Activated CD8-positive, alpha-beta T cell treated with anti-CD3 and anti-CD28 coated beads for 36 hours (primary cell): ENCODE measurements at regions of chr17 and their contacts with region 1.

Region 1: GRCh38 chr17:28661635-28662537 is at the starts of genes SDF2 and SUPT6H:
- DNase-seq: peak; percentile 98
- ATAC-seq: peak; percentile 87
- H3K4me3 Mint-ChIP-seq: peak within 1 kb of the TSS; percentile 97
- H3K27ac Mint-ChIP-seq: peak within 1 kb of the TSS; percentile 100
- H3K4me1 Mint-ChIP-seq: peaks cover 45% of the 10 kb centered on the region
- H3K27me3 Mint-ChIP-seq: no peaks in the 10 kb centered on the region
- CTCF ChIP-seq: no peak
- total RNA-seq, gene SDF2: 37.4 to 39.0 TPM
- total RNA-seq, gene SUPT6H: 60.3 to 63.3 TPM

Region 2: DNA sequence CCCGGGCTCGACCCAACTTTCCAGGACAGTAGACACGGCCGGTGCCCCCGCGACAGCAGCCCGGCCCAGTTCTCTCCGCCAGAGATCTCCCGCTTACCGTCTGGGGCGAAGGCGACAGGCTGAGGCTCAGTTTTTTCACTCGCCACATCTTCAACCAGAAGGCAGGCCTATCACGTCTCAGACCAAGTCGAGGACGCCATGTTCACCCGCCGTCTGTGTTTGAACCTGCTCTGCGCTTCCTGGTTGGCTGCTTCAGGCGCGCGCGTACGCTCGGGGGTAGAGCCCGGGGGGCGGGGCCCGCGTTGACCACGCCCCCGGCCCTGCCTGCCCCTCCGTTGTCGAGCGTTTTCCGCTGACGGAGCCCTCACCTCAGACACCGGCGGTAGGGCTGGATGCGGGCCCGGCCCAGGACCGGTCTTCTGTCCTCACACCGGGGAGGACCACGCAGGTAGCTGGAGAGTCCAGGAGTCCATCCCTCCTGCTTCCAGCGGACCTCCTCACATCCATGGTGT is 63.0 kb before region 1 on chr17 and contains the start of gene SPAG5:
- CTCF ChIA-PET with region 1: no interaction called
- POLR2A ChIA-PET with region 1: interaction called, 11 read pairs
- intact Hi-C with region 1: no loop called
- DNase-seq: peak; percentile 97
- ATAC-seq: peak; percentile 92
- H3K4me3 Mint-ChIP-seq: peak within 1 kb of the TSS; percentile 88
- H3K27ac Mint-ChIP-seq: peak within 1 kb of the TSS; percentile 91
- H3K4me1 Mint-ChIP-seq: peaks cover 17% of the 10 kb centered on the region
- H3K27me3 Mint-ChIP-seq: no peaks in the 10 kb centered on the region
- CTCF ChIP-seq: no peak
- total RNA-seq, gene SPAG5: 140 to 141 TPM

Region 3: DNA sequence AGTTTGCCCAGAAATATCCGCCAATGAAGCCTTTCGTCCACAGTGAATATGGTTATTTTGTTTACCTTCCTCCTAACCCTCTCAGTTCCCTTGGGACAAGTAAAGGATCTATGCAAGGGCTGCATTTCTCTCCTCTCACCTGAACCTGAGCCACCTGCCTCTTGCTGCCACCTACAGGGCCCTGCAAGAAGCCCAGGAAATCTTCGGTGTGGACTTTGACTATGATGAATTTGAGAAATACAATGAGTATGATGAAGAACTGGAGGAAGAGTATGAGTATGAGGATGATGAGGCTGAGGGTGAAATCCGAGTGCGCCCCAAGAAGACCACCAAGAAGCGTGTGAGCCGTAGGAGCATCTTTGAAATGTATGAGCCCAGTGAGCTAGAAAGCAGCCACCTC is 14.1 kb after region 1 on chr17:
- CTCF ChIA-PET with region 1: interaction called, 11 read pairs
- POLR2A ChIA-PET with region 1: interaction called, 3 read pairs
- intact Hi-C with region 1: no loop called
- DNase-seq: peak; percentile 24
- ATAC-seq: peak; percentile 27
- H3K4me3 Mint-ChIP-seq: no peak overlapping the region
- H3K27ac Mint-ChIP-seq: no peak overlapping the region
- H3K4me1 Mint-ChIP-seq: no peaks in the 10 kb centered on the region
- H3K27me3 Mint-ChIP-seq: no peaks in the 10 kb centered on the region
- CTCF ChIP-seq: no peak

Region 4: GRCh38 chr17:28720247-28720996 is 58.5 kb after region 1 on chr17:
- CTCF ChIA-PET with region 1: interaction called, 3 read pairs
- POLR2A ChIA-PET with region 1: interaction called, 13 read pairs
- intact Hi-C with region 1: no loop called
- DNase-seq: peak; percentile 58
- ATAC-seq: no peak
- H3K4me3 Mint-ChIP-seq: peak overlapping the region; percentile 100
- H3K27ac Mint-ChIP-seq: peak overlapping the region; percentile 99
- H3K4me1 Mint-ChIP-seq: peaks cover 40% of the 10 kb centered on the region
- H3K27me3 Mint-ChIP-seq: peaks cover 11% of the 10 kb centered on the region
- CTCF ChIP-seq: peak; percentile 32

Region 5: DNA sequence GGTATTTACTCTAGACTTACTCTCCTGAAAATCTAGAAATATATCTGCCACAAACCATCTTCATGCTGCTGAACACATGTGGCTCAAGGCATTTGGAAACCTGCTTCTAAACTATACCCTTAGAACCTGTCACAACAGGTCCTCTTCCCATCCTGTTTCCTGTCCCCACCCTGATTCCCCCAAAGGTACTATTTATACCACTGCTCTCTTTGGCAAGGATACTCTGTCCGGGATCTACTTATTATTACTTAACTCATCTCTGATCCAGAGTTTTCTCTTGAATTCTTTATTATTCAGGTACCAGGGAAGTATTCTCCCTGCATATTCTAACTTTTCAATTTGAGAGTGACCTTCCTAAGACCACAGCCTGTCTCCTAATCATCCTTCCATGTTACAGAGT is 115.3 kb after region 1 on chr17:
- CTCF ChIA-PET with region 1: no interaction called
- POLR2A ChIA-PET with region 1: no interaction called
- intact Hi-C with region 1: no loop called
- DNase-seq: no peak
- ATAC-seq: no peak
- H3K4me3 Mint-ChIP-seq: no peak overlapping the region
- H3K27ac Mint-ChIP-seq: peak overlapping the region; percentile 23
- H3K4me1 Mint-ChIP-seq: peaks cover 39% of the 10 kb centered on the region
- H3K27me3 Mint-ChIP-seq: no peaks in the 10 kb centered on the region
- CTCF ChIP-seq: no peak